ENCODE measurements at regions of chr11 and their contacts with region 1.

Region 1: GRCh38 chr11:108117746-108118371 is 3.5 kb upstream of the ACAT1 start:
- DNase-seq: peak; percentile 34
- H3K4me3 ChIP-seq: no peak overlapping the region
- H3K27ac ChIP-seq: no peak overlapping the region
- H3K27me3 ChIP-seq: no peaks in the 10 kb centered on the region
- CTCF ChIP-seq: peak; percentile 68

Region 2: GRCh38 chr11:108084811-108085210 is 33.0 kb before region 1 on chr11:
- CTCF ChIA-PET with region 1: interaction called, 10 read pairs
- POLR2A ChIA-PET with region 1: no interaction called
- DNase-seq: no peak
- H3K4me3 ChIP-seq: no peak overlapping the region
- H3K27ac ChIP-seq: no peak overlapping the region
- H3K27me3 ChIP-seq: no peaks in the 10 kb centered on the region
- CTCF ChIP-seq: no peak

Region 3: GRCh38 chr11:108233277-108233945 is 115.6 kb after region 1 on chr11:
- CTCF ChIA-PET with region 1: no interaction called
- POLR2A ChIA-PET with region 1: no interaction called
- DNase-seq: no peak
- H3K4me3 ChIP-seq: no peak overlapping the region
- H3K27ac ChIP-seq: no peak overlapping the region
- H3K27me3 ChIP-seq: no peaks in the 10 kb centered on the region
- CTCF ChIP-seq: no peak

Region 4: GRCh38 chr11:108561535-108561991 is 443.7 kb after region 1 on chr11:
- CTCF ChIA-PET with region 1: no interaction called
- POLR2A ChIA-PET with region 1: no interaction called
- DNase-seq: no peak
- H3K4me3 ChIP-seq: no peak overlapping the region
- H3K27ac ChIP-seq: no peak overlapping the region
- H3K27me3 ChIP-seq: no peaks in the 10 kb centered on the region
- CTCF ChIP-seq: no peak

Region 5: DNA sequence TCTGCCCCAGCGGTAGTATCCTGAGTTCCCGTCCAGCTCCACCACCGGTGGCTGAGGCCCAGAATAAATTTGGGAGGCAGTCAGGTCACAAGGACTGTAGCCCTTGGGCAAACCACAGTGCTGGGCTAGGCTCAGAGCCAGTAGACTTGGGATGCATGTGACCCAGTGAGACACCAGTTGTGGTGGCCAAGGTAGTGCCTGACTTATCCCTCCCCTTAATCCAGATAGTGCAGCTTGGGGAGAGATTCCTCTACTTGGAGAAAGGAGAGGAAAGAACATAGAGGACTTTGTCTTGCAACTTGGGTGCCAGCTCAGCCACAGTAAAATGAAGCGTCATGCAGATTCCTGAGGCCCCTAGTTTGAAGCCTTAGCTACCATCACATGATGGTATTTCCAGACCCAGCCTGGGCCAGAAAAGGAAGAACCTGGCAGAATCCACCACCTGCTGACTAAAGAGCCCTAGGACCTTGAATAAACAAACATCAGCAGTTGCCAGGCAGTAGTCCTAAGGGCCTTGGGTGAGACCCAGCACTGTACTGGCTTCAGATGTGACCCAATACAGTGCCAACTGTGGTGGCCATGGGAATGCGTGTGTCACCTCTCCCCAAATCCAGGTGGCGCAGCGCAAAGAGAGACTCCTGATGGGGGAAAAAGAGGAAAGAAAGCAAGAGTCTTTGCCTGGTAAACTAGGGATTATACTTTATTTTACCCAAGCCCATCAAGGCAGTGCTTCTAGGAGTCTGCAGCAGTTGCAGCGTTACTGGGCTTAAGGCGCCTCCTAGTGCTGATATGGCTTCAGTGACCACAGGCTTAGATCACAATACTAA is 530.1 kb after region 1 on chr11:
- CTCF ChIA-PET with region 1: interaction called, 24 read pairs
- POLR2A ChIA-PET with region 1: no interaction called
- DNase-seq: peak; percentile 62
- H3K4me3 ChIP-seq: no peak overlapping the region
- H3K27ac ChIP-seq: no peak overlapping the region
- H3K27me3 ChIP-seq: no peaks in the 10 kb centered on the region
- CTCF ChIP-seq: peak; percentile 92

Measured in AG04450 (cell line).